Mammary epithelial cell (primary cell): ENCODE measurements at regions of chr9 and their contacts with region 1.

Region 1: DNA sequence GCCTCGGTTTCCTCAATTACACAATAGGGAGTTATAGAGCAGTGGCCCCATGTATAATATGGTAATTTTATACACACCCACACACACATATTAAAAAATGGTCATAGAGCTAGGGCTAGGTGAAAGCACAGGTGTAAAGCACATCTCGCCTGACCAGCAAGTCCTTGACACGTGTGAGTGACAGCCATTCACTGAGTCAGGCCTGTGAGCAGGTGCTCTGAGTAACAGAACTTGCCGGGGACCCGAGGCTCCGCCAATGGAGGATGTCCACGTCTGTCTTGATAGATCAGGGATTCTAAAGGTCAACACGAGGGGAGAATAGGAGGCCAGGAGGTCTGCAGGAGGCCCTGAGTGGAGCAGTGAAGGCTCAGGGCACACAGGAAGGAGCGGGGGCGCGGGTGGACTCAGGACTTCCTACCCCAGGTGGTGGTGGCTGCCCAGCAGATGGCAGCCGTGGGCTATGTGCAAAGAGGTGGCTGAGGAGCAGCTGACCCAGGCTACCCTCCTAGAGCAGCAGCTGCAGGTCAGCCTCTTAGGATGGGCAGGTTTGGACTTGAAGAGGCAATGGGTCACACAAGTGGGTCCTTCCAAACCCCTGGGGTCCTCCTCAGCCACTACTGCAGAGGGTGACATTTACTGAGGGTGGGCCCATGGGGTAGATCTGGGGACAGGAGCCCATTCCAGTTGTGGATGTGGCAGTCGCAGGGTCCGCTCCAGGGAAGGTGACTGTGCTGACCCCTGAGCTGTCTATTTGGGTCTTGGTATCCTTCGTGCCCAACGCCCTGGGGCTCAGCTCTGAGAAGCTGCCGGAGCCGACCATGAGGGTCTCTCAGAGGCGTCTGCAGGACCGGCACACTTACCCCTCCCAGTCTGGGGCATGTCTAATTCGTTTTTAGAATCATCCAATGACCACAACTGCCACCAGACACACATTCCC is 45.9 kb downstream of the PRRT1B start:
- DNase-seq: peak; percentile 62
- H3K4me3 ChIP-seq: no peak overlapping the region
- H3K27ac ChIP-seq: no peak overlapping the region
- H3K4me1 ChIP-seq: peaks cover 6% of the 10 kb centered on the region
- H3K27me3 ChIP-seq: no peaks in the 10 kb centered on the region
- CTCF ChIP-seq: peak; percentile 81 to 94

Region 2: GRCh38 chr9:131645078-131645776 is 54.1 kb after region 1 on chr9:
- CTCF ChIA-PET with region 1: no interaction called
- dilution Hi-C with region 1: no loop called
- in situ Hi-C with region 1: no loop called
- intact Hi-C with region 1: no loop called
- DNase-seq: no peak
- H3K4me3 ChIP-seq: no peak overlapping the region
- H3K27ac ChIP-seq: no peak overlapping the region
- H3K4me1 ChIP-seq: peaks cover 10% of the 10 kb centered on the region
- H3K27me3 ChIP-seq: no peaks in the 10 kb centered on the region
- CTCF ChIP-seq: no peak

Region 3: DNA sequence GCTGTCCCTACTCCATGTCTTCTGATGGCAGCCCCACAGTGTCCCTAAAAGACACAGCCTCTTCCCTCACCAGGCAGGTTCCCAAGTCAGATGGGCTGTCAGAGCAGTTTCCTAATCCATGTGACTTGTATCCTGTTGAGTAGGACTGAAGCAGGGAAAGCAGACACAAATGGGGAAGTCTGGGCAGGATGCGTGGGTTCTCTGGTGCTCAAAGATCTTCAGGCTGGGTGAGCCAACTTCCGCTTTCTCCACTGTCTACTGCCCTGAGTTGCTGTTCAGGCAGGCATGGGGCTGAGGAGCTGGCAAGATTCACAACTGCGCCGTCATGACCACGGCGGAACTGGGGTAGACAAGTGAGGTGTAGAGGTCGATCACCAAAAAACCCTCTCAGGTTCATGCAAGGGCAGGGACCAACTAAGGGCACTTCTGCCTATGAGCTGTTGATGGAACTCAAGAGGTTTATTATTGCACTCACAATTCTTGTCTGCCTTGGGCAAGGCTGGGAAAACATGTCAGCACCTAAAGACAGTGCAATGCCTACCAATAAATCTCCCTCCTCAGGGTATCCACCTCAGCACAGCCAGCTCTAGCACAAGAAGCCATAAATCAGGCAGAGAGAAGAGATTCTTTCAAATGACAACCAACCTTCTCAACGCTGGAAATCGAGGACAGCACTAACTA is 65.3 kb after region 1 on chr9:
- CTCF ChIA-PET with region 1: no interaction called
- dilution Hi-C with region 1: no loop called
- in situ Hi-C with region 1: no loop called
- intact Hi-C with region 1: loop called (anchors 5 kb)
- DNase-seq: no peak
- H3K4me3 ChIP-seq: no peak overlapping the region
- H3K27ac ChIP-seq: peak overlapping the region; percentile 45
- H3K4me1 ChIP-seq: peaks cover 49% of the 10 kb centered on the region
- H3K27me3 ChIP-seq: no peaks in the 10 kb centered on the region
- CTCF ChIP-seq: no peak

Region 4: GRCh38 chr9:131714161-131714646 is 123.0 kb after region 1 on chr9:
- CTCF ChIA-PET with region 1: no interaction called
- dilution Hi-C with region 1: no loop called
- in situ Hi-C with region 1: no loop called
- intact Hi-C with region 1: loop called (anchors 1 kb)
- DNase-seq: peak; percentile 93
- H3K4me3 ChIP-seq: peak overlapping the region in 2 of 3 experiments; percentile 4 to 34
- H3K27ac ChIP-seq: peak overlapping the region; percentile 97
- H3K4me1 ChIP-seq: peaks cover 35% of the 10 kb centered on the region
- H3K27me3 ChIP-seq: no peaks in the 10 kb centered on the region
- CTCF ChIP-seq: no peak

Region 5: DNA sequence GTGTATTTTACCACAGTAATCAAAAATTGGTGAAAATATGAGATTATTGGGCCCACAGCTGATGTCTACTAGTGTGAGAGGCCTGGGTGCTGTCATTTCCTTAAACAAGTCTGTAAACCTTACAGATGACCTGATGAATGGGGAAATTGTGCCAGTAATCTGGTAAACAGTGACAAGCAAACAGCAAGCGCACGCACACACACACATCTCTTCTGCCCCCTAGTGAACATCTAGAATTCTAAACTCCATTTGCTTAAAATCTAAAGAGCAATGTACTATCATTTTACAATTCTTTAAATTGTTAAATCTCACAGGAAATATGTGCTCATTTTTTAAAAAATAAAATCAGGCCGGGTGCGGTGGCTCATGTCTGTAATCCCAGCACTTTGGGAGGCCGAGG is 156.2 kb after region 1 on chr9:
- CTCF ChIA-PET with region 1: no interaction called
- dilution Hi-C with region 1: no loop called
- in situ Hi-C with region 1: loop called in 1 of 2 experiments (anchors 5 kb)
- intact Hi-C with region 1: loop called (anchors 1 kb)
- DNase-seq: peak; percentile 42
- H3K4me3 ChIP-seq: no peak overlapping the region
- H3K27ac ChIP-seq: no peak overlapping the region
- H3K4me1 ChIP-seq: peaks cover 9% of the 10 kb centered on the region
- H3K27me3 ChIP-seq: no peaks in the 10 kb centered on the region
- CTCF ChIP-seq: peak; percentile 50 to 71

Region 6: GRCh38 chr9:132268725-132269352 is 677.7 kb after region 1 on chr9:
- CTCF ChIA-PET with region 1: no interaction called
- dilution Hi-C with region 1: no loop called
- in situ Hi-C with region 1: loop called in 1 of 2 experiments (anchors 25 kb)
- intact Hi-C with region 1: no loop called
- DNase-seq: no peak
- H3K4me3 ChIP-seq: no peak overlapping the region
- H3K27ac ChIP-seq: no peak overlapping the region
- H3K4me1 ChIP-seq: no peaks in the 10 kb centered on the region
- H3K27me3 ChIP-seq: no peaks in the 10 kb centered on the region
- CTCF ChIP-seq: peak; percentile 51 to 59